WTC11 (cell line): ENCODE measurements at regions of chr7 and their contacts with region 1.

Region 1: DNA sequence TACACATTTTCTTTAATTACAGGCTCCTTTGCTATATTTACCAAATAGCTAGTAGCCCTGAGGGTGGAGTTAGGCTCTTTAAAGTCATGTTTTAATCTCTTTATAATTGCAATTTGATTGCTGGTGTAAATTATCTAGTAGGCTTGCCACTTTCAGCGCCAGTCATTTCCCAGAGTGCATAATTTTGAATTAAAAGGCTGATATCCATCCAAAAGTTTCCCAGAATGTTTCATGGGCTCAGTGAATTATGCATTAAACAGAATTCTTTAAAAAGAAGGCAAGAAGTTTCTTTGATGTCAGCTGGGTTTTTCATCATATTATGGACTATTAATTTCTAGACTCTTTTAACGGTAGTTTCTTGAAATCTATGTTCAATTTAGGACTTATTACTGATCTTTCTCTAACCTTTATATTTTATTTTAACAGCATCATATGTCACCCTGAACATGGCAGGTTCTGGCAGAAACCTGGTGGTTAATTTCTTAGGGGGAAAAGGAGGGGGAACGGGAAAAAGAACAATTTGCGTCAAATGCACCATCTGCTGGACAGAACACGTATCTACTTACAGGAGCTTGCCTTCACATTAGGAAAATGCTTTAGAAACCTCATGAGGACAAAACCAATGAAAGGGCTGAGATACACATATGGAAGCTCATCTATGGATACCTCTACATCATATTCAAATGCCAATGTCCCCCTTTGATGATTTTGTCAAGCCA is 171.1 kb downstream of the GRM3 start:
- DNase-seq: peak; percentile 22
- ATAC-seq: peak; percentile 76
- H3K4me3 Mint-ChIP-seq: no peak overlapping the region
- H3K27ac Mint-ChIP-seq: no peak overlapping the region
- H3K4me1 Mint-ChIP-seq: no peaks in the 10 kb centered on the region
- H3K27me3 Mint-ChIP-seq: no peaks in the 10 kb centered on the region
- CTCF ChIP-seq: peak; percentile 40

Region 2: GRCh38 chr7:86598311-86598710 is 216.5 kb before region 1 on chr7:
- CTCF ChIA-PET with region 1: interaction called, 18 read pairs
- POLR2A ChIA-PET with region 1: no interaction called
- DNase-seq: peak; percentile 86
- ATAC-seq: peak; percentile 90
- H3K4me3 Mint-ChIP-seq: no peak overlapping the region
- H3K27ac Mint-ChIP-seq: no peak overlapping the region
- H3K4me1 Mint-ChIP-seq: peaks cover 9% of the 10 kb centered on the region
- H3K27me3 Mint-ChIP-seq: no peaks in the 10 kb centered on the region; the same call in 1 of the 2 replicates
- CTCF ChIP-seq: peak; percentile 54; the same call in 1 of the 2 replicates

Region 3: DNA sequence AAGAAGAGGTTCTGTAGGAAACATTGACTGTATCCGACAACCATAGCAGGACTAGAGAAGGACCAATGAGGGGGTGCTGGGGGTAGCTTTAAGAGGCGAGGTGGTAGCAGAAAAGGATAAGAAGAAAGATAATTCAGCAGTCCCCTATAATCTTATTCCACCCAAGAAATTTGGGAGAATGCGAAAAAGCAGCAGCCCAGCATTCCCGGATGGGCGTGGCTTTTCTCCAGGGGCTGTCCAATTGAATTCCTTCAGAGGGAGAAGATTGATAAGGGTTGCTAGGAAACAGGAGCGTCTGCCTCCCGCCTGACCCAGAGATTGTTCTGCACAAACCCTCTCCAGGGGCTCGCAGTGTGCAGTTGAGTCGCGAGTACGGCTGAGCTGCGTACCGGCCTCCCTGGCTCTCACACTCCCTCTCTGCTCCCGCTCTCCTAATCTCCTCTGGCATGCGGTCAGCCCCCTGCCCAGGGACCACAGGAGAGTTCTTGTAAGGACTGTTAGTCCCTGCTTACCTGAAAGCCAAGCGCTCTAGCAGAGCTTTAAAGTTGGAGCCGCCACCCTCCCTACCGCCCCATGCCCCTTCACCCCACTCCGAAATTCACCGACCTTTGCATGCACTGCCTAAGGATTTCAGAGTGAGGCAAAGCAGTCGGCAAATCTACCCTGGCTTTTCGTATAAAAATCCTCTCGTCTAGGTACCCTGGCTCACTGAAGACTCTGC is 171.1 kb before region 1 on chr7 and contains the start of gene GRM3:
- CTCF ChIA-PET with region 1: interaction called, 14 read pairs
- POLR2A ChIA-PET with region 1: no interaction called
- DNase-seq: peak; percentile 74
- ATAC-seq: peak; percentile 81
- H3K4me3 Mint-ChIP-seq: peak within 1 kb of the TSS; percentile 84
- H3K27ac Mint-ChIP-seq: no peak within 1 kb of the TSS
- H3K4me1 Mint-ChIP-seq: peaks cover 22% of the 10 kb centered on the region
- H3K27me3 Mint-ChIP-seq: peaks cover 26% of the 10 kb centered on the region
- CTCF ChIP-seq: no peak
- total RNA-seq, gene GRM3: 0.87 to 1.5 TPM (median 0.94 TPM) in 3 replicates

Region 4: DNA sequence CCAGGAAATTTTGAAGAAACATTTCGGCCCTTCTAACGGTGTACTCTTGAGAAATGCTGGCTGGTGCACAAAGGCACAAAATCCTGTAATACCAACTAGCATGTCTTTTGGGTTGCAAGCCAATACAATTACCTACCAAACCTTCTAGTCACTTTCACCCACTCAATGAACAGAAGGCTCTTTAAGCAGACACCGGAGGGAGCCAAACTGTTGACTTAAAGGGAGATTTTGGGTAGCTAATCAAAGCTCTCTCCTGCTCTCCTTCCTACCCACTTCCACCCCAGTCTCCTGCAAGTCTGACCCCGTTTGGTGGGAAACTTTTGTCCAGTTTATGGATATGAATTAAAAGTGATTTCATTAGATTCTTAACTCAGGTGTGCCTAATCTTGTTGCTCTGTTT is 147.1 kb before region 1 on chr7:
- CTCF ChIA-PET with region 1: interaction called, 57 read pairs
- POLR2A ChIA-PET with region 1: no interaction called
- DNase-seq: peak; percentile 22
- ATAC-seq: peak; percentile 93
- H3K4me3 Mint-ChIP-seq: no peak overlapping the region
- H3K27ac Mint-ChIP-seq: no peak overlapping the region
- H3K4me1 Mint-ChIP-seq: peaks cover 20% of the 10 kb centered on the region
- H3K27me3 Mint-ChIP-seq: no peaks in the 10 kb centered on the region
- CTCF ChIP-seq: no peak